ENCODE measurements at regions of chr22 and their contacts with region 1.

Region 1: DNA sequence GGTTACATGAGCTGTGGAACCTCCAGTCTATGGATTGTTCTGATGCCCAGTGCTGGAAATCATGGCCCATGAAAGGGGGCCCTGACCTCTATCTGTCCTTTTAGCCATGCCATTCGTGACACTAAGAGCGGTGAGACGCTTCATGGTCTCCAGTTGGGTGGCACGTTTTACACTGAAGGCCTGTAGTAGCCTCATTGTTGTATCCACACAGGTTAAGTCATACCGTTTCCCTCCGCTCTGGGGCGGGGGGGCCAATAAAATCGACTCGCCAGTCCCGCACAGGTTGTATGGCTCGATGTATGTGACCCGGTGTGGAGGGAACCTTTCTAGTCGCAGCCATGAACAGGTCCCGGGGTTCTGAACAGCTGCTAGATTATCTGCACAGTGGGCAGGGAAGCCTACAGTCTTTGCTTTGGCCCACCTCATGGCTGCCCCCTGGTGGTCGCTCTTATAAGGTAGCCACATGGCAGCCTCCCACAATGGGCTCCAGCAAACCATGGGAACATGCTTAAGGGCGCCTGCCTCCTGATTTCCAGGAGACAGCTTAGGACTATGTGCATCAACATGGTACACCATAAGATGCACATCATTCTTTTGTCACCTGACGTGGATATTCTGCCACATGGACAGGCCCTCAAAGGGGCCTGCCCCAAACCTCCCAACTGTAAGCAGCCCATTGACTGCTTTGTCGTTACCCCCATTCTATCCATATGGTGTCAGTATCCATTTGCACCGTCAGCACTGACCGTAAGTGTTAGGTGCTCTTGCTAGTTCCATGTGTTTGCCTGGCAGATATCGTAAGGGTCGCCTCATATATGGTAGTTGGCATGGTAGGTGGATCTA is 19.7 kb upstream of the APOL3 start:
- DNase-seq: peak; percentile 81
- H3K4me3 ChIP-seq: no peak overlapping the region
- H3K27ac ChIP-seq: no peak overlapping the region
- H3K4me1 ChIP-seq: peaks cover 7% of the 10 kb centered on the region
- H3K27me3 ChIP-seq: no peaks in the 10 kb centered on the region

Region 2: DNA sequence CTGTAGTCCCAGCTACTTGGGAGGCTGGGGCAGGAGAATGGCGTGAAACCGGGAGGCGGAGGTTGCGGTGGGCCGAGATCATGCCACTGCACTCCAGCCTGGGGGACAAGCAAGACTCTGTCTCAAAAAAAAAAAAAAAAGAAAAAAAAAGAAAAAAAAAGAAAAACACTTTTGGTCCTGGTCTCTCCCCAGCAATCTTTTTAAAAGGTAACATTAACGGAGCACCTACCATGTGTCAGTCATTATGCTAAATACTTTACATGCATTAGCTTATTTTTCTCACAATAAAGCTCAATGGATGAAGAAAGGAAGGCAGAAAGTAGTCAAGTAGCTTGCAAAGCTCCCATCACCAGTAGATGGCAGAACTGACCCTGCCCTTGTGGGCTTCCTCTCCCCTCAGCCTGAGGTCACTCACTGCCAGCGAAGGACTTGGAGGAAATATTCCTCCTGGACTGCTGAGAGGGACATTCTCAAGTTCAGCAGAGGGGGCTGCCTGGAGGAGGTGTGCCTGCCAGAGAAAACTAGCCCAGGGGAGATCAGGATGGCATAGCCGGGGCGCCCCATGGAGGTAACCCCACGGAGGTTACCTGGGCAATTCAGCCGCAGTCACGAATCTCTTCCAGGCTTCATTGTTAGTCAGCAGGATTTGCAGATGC is 35.2 kb before region 1 on chr22:
- in situ Hi-C with region 1: loop called (anchors 5 kb)
- DNase-seq: peak; percentile 80
- H3K4me3 ChIP-seq: no peak overlapping the region
- H3K27ac ChIP-seq: peak overlapping the region; percentile 16; the same call in 1 of the 2 replicates
- H3K4me1 ChIP-seq: peaks cover 8% of the 10 kb centered on the region
- H3K27me3 ChIP-seq: no peaks in the 10 kb centered on the region

Region 3: DNA sequence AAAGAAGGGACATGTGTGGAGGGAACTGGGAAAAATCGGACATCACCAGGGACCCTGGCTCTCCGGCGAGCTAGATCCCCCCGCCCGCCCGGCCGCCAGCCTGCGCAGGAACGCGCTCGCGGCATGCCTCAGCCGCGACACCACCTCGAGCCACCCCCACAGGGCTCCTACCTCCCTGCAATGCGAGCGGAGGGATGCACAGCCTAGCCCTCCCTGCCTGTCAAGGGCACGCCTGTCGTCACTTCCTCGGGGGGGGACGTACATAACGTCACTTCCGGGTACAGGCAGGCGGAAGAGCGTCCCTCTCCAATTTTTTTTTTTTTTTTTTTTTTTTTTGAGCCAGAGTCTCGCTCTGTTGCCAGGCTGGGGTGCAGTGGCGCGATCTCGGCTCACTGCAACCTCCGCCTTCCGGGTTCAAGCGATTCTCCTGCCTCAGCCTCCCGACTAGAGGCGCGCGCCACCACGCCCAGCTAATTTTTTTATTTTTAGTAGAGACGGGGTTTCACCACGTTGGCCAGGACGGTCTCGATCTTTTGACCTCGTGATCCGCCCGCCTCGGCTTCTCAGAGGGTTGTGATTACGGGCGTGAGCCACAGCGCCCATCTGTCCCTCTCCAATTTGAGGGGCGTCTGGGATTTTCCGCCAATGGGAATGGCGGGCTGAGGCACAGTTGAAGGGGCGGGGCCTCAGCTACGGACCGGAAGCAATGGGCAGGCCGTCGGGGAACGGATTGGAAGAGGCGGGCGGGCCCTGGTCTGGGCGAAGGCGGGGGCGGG is 301.3 kb after region 1 on chr22 and contains the start of gene TXN2:
- in situ Hi-C with region 1: loop called (anchors 25 kb)
- DNase-seq: peak; percentile 99
- H3K4me3 ChIP-seq: peak within 1 kb of the TSS; percentile 85
- H3K27ac ChIP-seq: peak within 1 kb of the TSS; percentile 99
- H3K4me1 ChIP-seq: peaks cover 15% of the 10 kb centered on the region
- H3K27me3 ChIP-seq: no peaks in the 10 kb centered on the region
- total RNA-seq, gene TXN2: 24.0 and 33.1 TPM in 2 replicates